A549 (cell line): ENCODE measurements at regions of chr1 and their contacts with region 1.

Region 1: GRCh38 chr1:117284399-117285215 is 73.9 kb upstream of the VTCN1 start:
- DNase-seq: peak; percentile 43 to 71
- ATAC-seq: peak; percentile 86
- H3K4me3 ChIP-seq: no peak overlapping the region
- H3K27ac ChIP-seq: no peak overlapping the region
- H3K4me1 ChIP-seq: no peaks in the 10 kb centered on the region
- CTCF ChIP-seq: peak; percentile 77
- EP300 ChIP-seq: no peak
- POLR2A ChIP-seq: no peak
- RAD21 ChIP-seq: peak; percentile 83 to 88

Region 2: GRCh38 chr1:117059678-117060440 is 224.7 kb before region 1 on chr1 and contains the start of gene TTF2:
- CTCF ChIA-PET with region 1: interaction called, 14 read pairs
- POLR2A ChIA-PET with region 1: no interaction called
- DNase-seq: peak; percentile 94 to 98
- ATAC-seq: peak; percentile 95 to 98
- H3K4me3 ChIP-seq: peak within 1 kb of the TSS; percentile 78
- H3K27ac ChIP-seq: peak within 1 kb of the TSS; percentile 76 to 88
- H3K4me1 ChIP-seq: peaks cover 19% of the 10 kb centered on the region; the same call in 2 of the 3 replicates
- CTCF ChIP-seq: no peak
- EP300 ChIP-seq: no peak
- POLR2A ChIP-seq: peak; percentile 47
- RAD21 ChIP-seq: no peak
- polyA plus RNA-seq, gene TTF2: 26.6 and 31.0 TPM in 2 replicates

Region 3: GRCh38 chr1:117121776-117122697 is 162.6 kb before region 1 on chr1:
- CTCF ChIA-PET with region 1: interaction called, 22 read pairs
- POLR2A ChIA-PET with region 1: no interaction called
- DNase-seq: peak; percentile 85 to 93
- ATAC-seq: peak; percentile 98 to 99
- H3K4me3 ChIP-seq: peak overlapping the region; percentile 60
- H3K27ac ChIP-seq: peak overlapping the region; percentile 83 to 93
- H3K4me1 ChIP-seq: peaks cover 5% of the 10 kb centered on the region; the same call in 2 of the 3 replicates
- CTCF ChIP-seq: peak; percentile 61
- EP300 ChIP-seq: no peak
- POLR2A ChIP-seq: no peak
- RAD21 ChIP-seq: peak; percentile 58 to 72

Region 4: DNA sequence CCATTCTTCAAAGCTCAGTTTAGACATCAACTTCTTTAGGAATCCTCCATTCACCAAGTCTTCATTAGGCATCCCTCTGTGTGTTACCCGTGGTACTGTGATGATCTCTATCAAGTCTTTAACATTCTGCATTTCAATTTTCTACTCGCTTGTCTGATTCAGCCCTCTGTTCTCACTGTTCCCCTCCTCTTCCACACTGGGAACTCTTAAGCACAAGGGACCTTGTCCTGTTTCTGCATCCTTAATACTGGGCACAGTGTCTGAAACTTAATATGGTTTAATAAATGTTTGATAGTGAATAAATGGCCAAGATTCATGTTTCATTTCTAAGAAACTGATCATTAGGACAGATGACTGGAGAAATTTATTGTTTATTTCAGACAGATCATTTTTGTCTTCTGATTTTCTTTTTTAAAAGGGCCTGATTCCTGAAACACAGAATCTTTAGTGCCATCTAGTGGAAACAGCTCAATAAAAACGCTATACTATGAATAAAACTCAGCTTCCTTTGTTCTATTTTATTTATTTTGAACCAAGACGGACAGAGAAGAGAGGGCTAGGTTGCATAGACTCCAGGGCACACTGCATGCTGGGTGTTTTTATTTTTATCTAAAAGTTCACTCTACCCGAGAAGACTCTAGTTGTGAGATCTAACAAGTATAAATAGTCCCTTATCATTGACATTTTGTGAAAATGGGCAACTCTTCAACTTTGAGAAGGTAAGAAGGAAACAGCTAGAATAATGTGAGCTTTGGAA is 156.1 kb before region 1 on chr1:
- CTCF ChIA-PET with region 1: interaction called, 16 read pairs
- POLR2A ChIA-PET with region 1: no interaction called
- DNase-seq: peak; percentile 22 to 23
- ATAC-seq: peak in 1 of 2 experiments; percentile 68; a peak in 3 of 6 replicates
- H3K4me3 ChIP-seq: no peak overlapping the region
- H3K27ac ChIP-seq: peak overlapping the region in 1 of 2 experiments; percentile 44; a peak in 1 of 6 replicates
- H3K4me1 ChIP-seq: peaks cover 4% of the 10 kb centered on the region; the same call in 1 of the 3 replicates
- CTCF ChIP-seq: peak; percentile 54
- EP300 ChIP-seq: no peak
- POLR2A ChIP-seq: no peak
- RAD21 ChIP-seq: peak; percentile 32 to 46; a peak in 4 of 5 replicates

Region 5: GRCh38 chr1:117146570-117147346 is 137.8 kb before region 1 on chr1:
- CTCF ChIA-PET with region 1: interaction called, 10 read pairs
- POLR2A ChIA-PET with region 1: no interaction called
- DNase-seq: peak; percentile 34 to 73
- ATAC-seq: peak; percentile 82 to 87; a peak in 5 of 6 replicates
- H3K4me3 ChIP-seq: 0 out of 3 replicates have a peak overlapping the region, but pooled peaks have one; percentile 13
- H3K27ac ChIP-seq: peak overlapping the region; percentile 80 to 87
- H3K4me1 ChIP-seq: peaks cover 29% of the 10 kb centered on the region
- CTCF ChIP-seq: no peak
- EP300 ChIP-seq: peak in 1 of 2 experiments; percentile 29; a peak in 2 of 5 replicates
- POLR2A ChIP-seq: no peak
- RAD21 ChIP-seq: no peak

Region 6: GRCh38 chr1:117262971-117263370 is 21.6 kb before region 1 on chr1:
- CTCF ChIA-PET with region 1: no interaction called
- POLR2A ChIA-PET with region 1: no interaction called
- DNase-seq: no peak
- ATAC-seq: no peak
- H3K4me3 ChIP-seq: no peak overlapping the region
- H3K27ac ChIP-seq: no peak overlapping the region
- H3K4me1 ChIP-seq: no peaks in the 10 kb centered on the region
- CTCF ChIP-seq: no peak
- EP300 ChIP-seq: no peak
- POLR2A ChIP-seq: no peak
- RAD21 ChIP-seq: no peak